K562 (cell line): ENCODE measurements at regions of chr14 and their contacts with region 1.

Region 1: DNA sequence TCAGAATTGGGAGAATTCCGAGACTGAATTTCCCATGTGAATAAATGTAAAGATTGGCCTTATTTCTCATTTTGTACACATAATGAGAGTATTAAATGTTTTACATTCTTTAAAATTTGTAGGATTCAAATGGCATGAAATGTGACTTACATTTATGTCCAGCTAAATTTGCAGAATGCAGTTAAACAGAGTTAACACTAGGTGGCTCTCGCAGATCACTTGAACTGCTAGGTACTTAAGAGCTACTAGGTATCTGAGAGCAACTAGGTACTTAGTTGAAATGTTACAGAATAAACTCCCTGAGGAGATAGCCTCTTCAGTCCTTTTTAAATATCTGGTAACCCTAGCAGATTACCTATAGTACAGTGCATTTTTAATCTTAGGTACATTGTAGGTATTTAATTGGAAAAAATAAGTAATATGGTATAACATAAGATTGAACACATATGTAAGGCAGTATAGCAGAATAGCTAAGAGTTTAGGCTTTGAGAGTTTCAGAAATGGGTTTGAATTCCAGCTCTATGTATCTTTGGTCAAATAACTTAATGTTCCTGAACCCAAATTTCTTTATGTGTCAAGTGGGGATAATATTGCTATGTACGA is 73.8 kb downstream of the KIAA0586 start:
- DNase-seq: peak; percentile 9 to 49 (median 20)
- ATAC-seq: peak; percentile 83
- H3K4me3 ChIP-seq: no peak overlapping the region
- H3K27ac ChIP-seq: no peak overlapping the region
- H3K4me1 ChIP-seq: no peaks in the 10 kb centered on the region
- H3K27me3 ChIP-seq: no peaks in the 10 kb centered on the region
- CTCF ChIP-seq: peak; percentile 54 to 75 (median 59); a peak in 5 of 6 replicates
- EP300 ChIP-seq: no peak
- POLR2A ChIP-seq: no peak
- RAD21 ChIP-seq: peak; percentile 76 to 82

Region 2: GRCh38 chr14:58637391-58638230 is 136.3 kb after region 1 on chr14 and contains the start of gene DACT1:
- CTCF ChIA-PET with region 1: no interaction called
- POLR2A ChIA-PET with region 1: no interaction called
- in situ Hi-C with region 1: no loop called
- intact Hi-C with region 1: loop called (anchors 5 kb)
- DNase-seq: peak; percentile 27 to 66 (median 48)
- ATAC-seq: peak; percentile 87
- H3K4me3 ChIP-seq: peak within 1 kb of the TSS; percentile 18
- H3K27ac ChIP-seq: no peak within 1 kb of the TSS
- H3K4me1 ChIP-seq: peaks cover 0 to 15% of the 10 kb centered on the region in 2 experiments; a peak in 2 of 5 replicates
- H3K27me3 ChIP-seq: peaks cover 14 to 19% of the 10 kb centered on the region in 2 experiments; a peak in 4 of 5 replicates
- CTCF ChIP-seq: no peak
- EP300 ChIP-seq: no peak
- POLR2A ChIP-seq: no peak
- RAD21 ChIP-seq: no peak
- polyA plus RNA-seq, gene DACT1: 0.07 to 0.13 TPM

Region 3: GRCh38 chr14:58947814-58948445 is 446.6 kb after region 1 on chr14:
- CTCF ChIA-PET with region 1: no interaction called
- POLR2A ChIA-PET with region 1: no interaction called
- in situ Hi-C with region 1: no loop called
- intact Hi-C with region 1: loop called (anchors 10 kb)
- DNase-seq: no peak
- ATAC-seq: no peak
- H3K4me3 ChIP-seq: no peak overlapping the region
- H3K27ac ChIP-seq: no peak overlapping the region
- H3K4me1 ChIP-seq: no peaks in the 10 kb centered on the region
- H3K27me3 ChIP-seq: no peaks in the 10 kb centered on the region
- CTCF ChIP-seq: no peak
- EP300 ChIP-seq: no peak
- POLR2A ChIP-seq: no peak
- RAD21 ChIP-seq: no peak

Region 4: GRCh38 chr14:59018978-59019377 is 517.7 kb after region 1 on chr14:
- CTCF ChIA-PET with region 1: no interaction called
- POLR2A ChIA-PET with region 1: no interaction called
- in situ Hi-C with region 1: no loop called
- intact Hi-C with region 1: loop called (anchors 5 kb)
- DNase-seq: peak in 2 of 4 experiments; percentile 4
- ATAC-seq: peak; percentile 40; the same call in 1 of the 3 replicates
- H3K4me3 ChIP-seq: no peak overlapping the region
- H3K27ac ChIP-seq: no peak overlapping the region
- H3K4me1 ChIP-seq: no peaks in the 10 kb centered on the region
- H3K27me3 ChIP-seq: no peaks in the 10 kb centered on the region
- CTCF ChIP-seq: peak; percentile 19 to 28 (median 26); a peak in 2 of 6 replicates
- EP300 ChIP-seq: no peak
- POLR2A ChIP-seq: no peak
- RAD21 ChIP-seq: peak in 1 of 2 experiments; percentile 32; a peak in 1 of 4 replicates